K562 (cell line): ENCODE measurements at regions of chr17 and their contacts with region 1.

Region 1: GRCh38 chr17:75845049-75845860 is 1.1 kb upstream of the UNC13D start:
- DNase-seq: peak; percentile 79 to 98 (median 87)
- ATAC-seq: peak; percentile 85
- H3K4me3 ChIP-seq: peak overlapping the region; percentile 69
- H3K27ac ChIP-seq: peak overlapping the region; percentile 95
- H3K4me1 ChIP-seq: peaks cover 39 to 87% of the 10 kb centered on the region in 2 experiments
- H3K27me3 ChIP-seq: no peaks in the 10 kb centered on the region
- CTCF ChIP-seq: peak; percentile 85 to 92 (median 90)
- EP300 ChIP-seq: peak; percentile 80
- POLR2A ChIP-seq: peak; percentile 68
- RAD21 ChIP-seq: peak; percentile 54 to 76

Region 2: DNA sequence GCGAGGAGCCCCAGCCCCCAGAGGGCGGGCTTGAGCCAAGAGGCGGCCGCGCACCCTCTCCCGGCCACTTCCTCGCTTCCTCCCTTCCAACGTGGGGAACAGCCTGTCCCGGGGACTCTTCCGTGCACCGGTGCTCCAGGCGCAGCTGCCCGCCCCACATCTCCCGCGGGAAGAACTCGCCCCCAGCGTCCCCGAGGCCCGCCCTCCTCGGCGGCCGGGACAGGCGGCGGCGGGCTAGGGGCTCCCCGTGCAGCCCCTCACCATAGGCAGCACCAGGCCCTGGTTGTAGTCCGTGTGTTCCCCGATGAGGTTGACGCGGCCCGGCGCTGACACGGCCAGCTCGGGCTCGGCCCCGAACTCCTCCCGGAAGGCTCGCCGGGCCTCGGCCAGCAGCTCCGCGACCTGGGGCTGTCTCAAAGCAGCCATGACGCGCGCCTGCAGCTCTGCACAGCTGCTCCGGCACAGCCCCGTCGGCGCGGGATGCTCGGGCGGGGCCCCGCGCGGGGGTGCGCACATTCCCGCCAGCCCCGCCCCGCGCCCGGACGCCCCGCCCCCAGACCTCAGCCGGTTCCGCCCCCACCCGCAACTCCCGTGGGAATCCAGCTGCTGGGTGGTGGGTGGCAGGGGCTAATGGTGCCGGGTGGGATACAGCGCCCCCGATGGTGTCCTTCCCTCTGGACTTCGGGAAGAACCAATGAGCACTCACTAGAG is 80.4 kb before region 1 on chr17 and contains the start of gene GALK1:
- CTCF ChIA-PET with region 1: interaction called, 4 read pairs
- POLR2A ChIA-PET with region 1: interaction called, 3 read pairs
- in situ Hi-C with region 1: no loop called
- intact Hi-C with region 1: loop called (anchors 5 kb)
- DNase-seq: peak; percentile 85 to 92 (median 90)
- ATAC-seq: peak; percentile 95
- H3K4me3 ChIP-seq: peak within 1 kb of the TSS; percentile 74
- H3K27ac ChIP-seq: peak within 1 kb of the TSS; percentile 59
- H3K4me1 ChIP-seq: peaks cover 12 to 38% of the 10 kb centered on the region in 2 experiments
- H3K27me3 ChIP-seq: no peaks in the 10 kb centered on the region
- CTCF ChIP-seq: peak; percentile 82 to 96 (median 92); a peak in 5 of 6 replicates
- EP300 ChIP-seq: no peak
- POLR2A ChIP-seq: peak; percentile 65
- RAD21 ChIP-seq: peak; percentile 78 to 86
- polyA plus RNA-seq, gene GALK1: 0.45 to 2.1 TPM

Region 3: GRCh38 chr17:75827252-75828115 is 17.8 kb before region 1 on chr17:
- CTCF ChIA-PET with region 1: no interaction called
- POLR2A ChIA-PET with region 1: interaction called, 46 read pairs
- in situ Hi-C with region 1: no loop called
- intact Hi-C with region 1: no loop called
- DNase-seq: peak in 3 of 4 experiments; percentile 58 to 65 (median 65)
- ATAC-seq: peak; percentile 62
- H3K4me3 ChIP-seq: no peak overlapping the region
- H3K27ac ChIP-seq: no peak overlapping the region
- H3K4me1 ChIP-seq: peaks cover 0 to 53% of the 10 kb centered on the region in 2 experiments; a peak in 2 of 5 replicates
- H3K27me3 ChIP-seq: no peaks in the 10 kb centered on the region
- CTCF ChIP-seq: peak; percentile 59 to 73 (median 64)
- EP300 ChIP-seq: no peak
- POLR2A ChIP-seq: 0 out of 2 replicates have a peak, but pooled peaks have one; percentile 1
- RAD21 ChIP-seq: peak in 1 of 2 experiments; percentile 54; a peak in 2 of 4 replicates

Region 4: GRCh38 chr17:75855310-75856081 is 10.2 kb after region 1 on chr17 and contains the start of gene WBP2:
- CTCF ChIA-PET with region 1: interaction called, 4 read pairs
- POLR2A ChIA-PET with region 1: interaction called, 66 read pairs
- in situ Hi-C with region 1: no loop called
- intact Hi-C with region 1: no loop called
- DNase-seq: peak; percentile 91 to 100 (median 95)
- ATAC-seq: peak; percentile 90
- H3K4me3 ChIP-seq: peak within 1 kb of the TSS; percentile 88
- H3K27ac ChIP-seq: peak within 1 kb of the TSS; percentile 93
- H3K4me1 ChIP-seq: peaks cover 31% of the 10 kb centered on the region in 2 experiments
- H3K27me3 ChIP-seq: no peaks in the 10 kb centered on the region
- CTCF ChIP-seq: peak; percentile 59 to 76 (median 66)
- EP300 ChIP-seq: no peak
- POLR2A ChIP-seq: peak; percentile 98
- RAD21 ChIP-seq: peak; percentile 57 to 59; a peak in 3 of 4 replicates
- polyA plus RNA-seq, gene WBP2: 2.2 to 3.7 TPM